IMR-90 (cell line): ENCODE measurements at regions of chr7 and their contacts with region 1.

Region 1: GRCh38 chr7:93092757-93093370 is 24.9 kb downstream of the SAMD9 start:
- DNase-seq: peak; percentile 71
- ATAC-seq: peak; percentile 86
- H3K4me3 ChIP-seq: no peak overlapping the region
- H3K27ac ChIP-seq: no peak overlapping the region
- H3K4me1 ChIP-seq: no peaks in the 10 kb centered on the region
- H3K27me3 ChIP-seq: peaks cover 9% of the 10 kb centered on the region
- CTCF ChIP-seq: peak; percentile 67
- POLR2A ChIP-seq: no peak
- RAD21 ChIP-seq: peak; percentile 80

Region 2: GRCh38 chr7:93374345-93374940 is 281.6 kb after region 1 on chr7:
- CTCF ChIA-PET with region 1: no interaction called
- POLR2A ChIA-PET with region 1: no interaction called
- dilution Hi-C with region 1: no loop called
- in situ Hi-C with region 1: no loop called
- intact Hi-C with region 1: no loop called
- DNase-seq: peak; percentile 39
- ATAC-seq: peak; percentile 98
- H3K4me3 ChIP-seq: no peak overlapping the region
- H3K27ac ChIP-seq: no peak overlapping the region
- H3K4me1 ChIP-seq: no peaks in the 10 kb centered on the region
- H3K27me3 ChIP-seq: peaks cover 8% of the 10 kb centered on the region
- CTCF ChIP-seq: peak; percentile 81
- POLR2A ChIP-seq: no peak
- RAD21 ChIP-seq: peak; percentile 74

Region 3: DNA sequence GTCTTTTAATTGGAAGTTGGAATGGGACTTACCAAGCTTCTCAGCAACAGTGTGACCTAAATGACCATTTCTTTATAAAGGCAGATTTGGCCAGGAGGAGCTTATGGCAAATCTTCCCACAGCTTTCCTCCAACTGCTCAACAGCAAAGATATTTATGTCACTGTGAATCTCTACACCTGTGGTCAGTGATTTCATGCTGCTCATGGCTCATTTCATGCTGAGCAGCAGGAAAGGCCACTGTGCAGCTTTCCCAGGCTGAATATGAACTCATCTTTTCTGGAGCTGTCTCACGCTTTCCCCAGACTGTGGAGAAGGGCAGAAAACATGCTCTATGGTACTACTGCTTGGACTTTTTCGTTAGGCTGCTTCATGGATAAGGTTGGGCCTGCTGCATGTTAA is 451.8 kb after region 1 on chr7:
- CTCF ChIA-PET with region 1: no interaction called
- POLR2A ChIA-PET with region 1: no interaction called
- dilution Hi-C with region 1: no loop called
- in situ Hi-C with region 1: no loop called
- intact Hi-C with region 1: loop called (anchors 10 kb)
- DNase-seq: no peak
- ATAC-seq: no peak
- H3K4me3 ChIP-seq: no peak overlapping the region
- H3K27ac ChIP-seq: no peak overlapping the region
- H3K4me1 ChIP-seq: no peaks in the 10 kb centered on the region
- H3K27me3 ChIP-seq: no peaks in the 10 kb centered on the region; the same call in 1 of the 2 replicates
- CTCF ChIP-seq: no peak
- POLR2A ChIP-seq: no peak
- RAD21 ChIP-seq: no peak